AG04449 (cell line): ENCODE measurements at regions of chr18 and their contacts with region 1.

Region 1: DNA sequence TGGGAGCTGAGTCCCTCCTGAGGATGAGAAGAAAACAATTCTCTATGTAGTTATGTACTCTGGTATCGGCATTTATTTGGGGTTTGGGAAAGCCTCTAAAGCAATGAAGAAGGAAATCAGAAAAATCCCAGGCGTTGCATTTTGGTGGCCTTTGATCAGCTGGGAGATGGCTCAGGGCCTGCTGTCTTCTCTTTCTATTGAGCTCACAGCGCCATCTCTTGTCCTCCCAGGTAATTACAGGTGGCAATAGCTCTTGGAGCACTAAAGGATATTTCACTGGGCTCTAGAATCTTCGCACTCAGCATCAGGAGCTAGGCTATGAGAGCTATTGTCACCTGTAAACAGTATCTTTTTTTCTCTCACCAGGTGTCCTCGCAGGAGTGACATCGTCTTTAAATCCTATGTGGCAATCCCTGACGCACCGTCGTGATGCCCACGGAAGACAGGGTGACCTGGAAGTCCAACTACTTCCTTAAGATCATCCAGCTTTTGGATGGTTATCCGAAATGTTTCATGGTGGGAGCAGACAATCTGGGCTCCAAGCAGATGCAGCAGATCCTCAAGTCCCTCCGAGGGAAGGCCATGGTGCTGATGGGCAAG is 76.1 kb upstream of the PMAIP1 start:
- DNase-seq: no peak
- H3K4me3 ChIP-seq: no peak overlapping the region
- CTCF ChIP-seq: peak; percentile 79

Region 2: DNA sequence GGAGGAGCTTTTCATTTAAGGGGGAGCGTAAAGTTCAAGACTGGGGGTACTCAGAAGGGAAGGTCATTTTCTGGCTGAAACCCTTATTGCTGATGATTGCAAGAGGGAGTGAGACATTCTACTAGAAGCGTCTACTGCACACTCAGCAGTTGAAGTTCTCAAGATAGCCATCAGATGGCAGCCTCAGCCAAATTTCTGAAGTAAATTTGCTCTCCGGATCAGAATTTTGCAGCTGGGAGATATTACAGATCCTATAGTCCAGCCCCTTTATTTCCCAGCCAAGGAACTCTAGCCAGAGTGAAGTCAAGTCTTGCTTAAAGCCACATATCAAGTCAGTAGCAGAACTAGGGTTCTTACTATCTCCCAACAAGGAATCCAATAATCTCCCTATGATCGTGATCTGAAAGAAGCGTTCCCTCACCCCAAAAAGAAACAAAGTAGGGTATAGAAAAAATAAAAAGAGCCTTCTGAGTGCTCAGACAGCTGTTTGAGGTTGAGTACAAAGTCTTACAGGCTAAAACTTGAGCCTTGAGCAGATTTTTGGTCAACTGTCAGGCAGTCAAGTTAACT is 574.4 kb before region 1 on chr18:
- CTCF ChIA-PET with region 1: interaction called, 25 read pairs
- POLR2A ChIA-PET with region 1: no interaction called
- DNase-seq: no peak
- H3K4me3 ChIP-seq: no peak overlapping the region
- CTCF ChIP-seq: peak; percentile 65

Region 3: DNA sequence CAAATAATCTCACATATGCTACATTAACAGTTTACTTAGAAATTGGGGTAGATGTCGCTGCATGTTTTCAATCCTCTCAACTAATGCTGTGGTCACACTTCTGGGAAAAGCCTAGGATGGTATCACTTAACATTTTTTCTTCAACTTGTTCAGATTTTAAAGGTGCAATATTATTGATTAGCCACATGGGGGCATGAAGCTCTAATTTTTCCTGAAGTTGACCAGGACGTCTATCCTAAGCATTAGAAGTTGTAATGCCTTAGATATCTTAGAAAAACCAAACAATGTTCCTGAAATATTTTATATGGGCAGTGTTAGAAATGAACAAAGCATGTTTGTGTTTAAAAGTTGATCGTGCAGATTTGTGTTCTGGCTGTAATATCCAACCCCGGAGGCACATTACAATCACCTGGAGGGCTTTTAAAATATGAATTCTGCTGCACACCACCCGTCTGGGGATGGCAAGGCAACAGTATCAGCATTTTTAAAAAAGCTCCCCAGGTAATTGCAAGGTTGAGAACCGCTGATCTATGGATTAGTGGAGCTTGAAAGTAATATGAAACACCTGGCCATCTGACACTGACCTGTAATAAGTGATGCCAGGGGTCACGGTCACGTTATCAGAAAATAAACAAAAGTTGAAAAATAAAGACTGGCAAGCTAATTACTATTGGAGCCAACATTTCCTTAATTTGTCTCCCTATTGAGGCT is 364.2 kb before region 1 on chr18:
- CTCF ChIA-PET with region 1: interaction called, 258 read pairs
- POLR2A ChIA-PET with region 1: interaction called, 5 read pairs
- DNase-seq: no peak
- H3K4me3 ChIP-seq: no peak overlapping the region
- CTCF ChIP-seq: peak; percentile 23

Region 4: GRCh38 chr18:59631583-59632181 is 192.0 kb before region 1 on chr18:
- CTCF ChIA-PET with region 1: interaction called, 216 read pairs
- POLR2A ChIA-PET with region 1: no interaction called
- DNase-seq: no peak
- H3K4me3 ChIP-seq: no peak overlapping the region
- CTCF ChIP-seq: peak; percentile 59

Region 5: GRCh38 chr18:59672235-59672711 is 151.4 kb before region 1 on chr18:
- CTCF ChIA-PET with region 1: interaction called, 36 read pairs
- POLR2A ChIA-PET with region 1: interaction called, 3 read pairs
- DNase-seq: no peak
- H3K4me3 ChIP-seq: no peak overlapping the region
- CTCF ChIP-seq: no peak

Region 6: GRCh38 chr18:59705145-59705544 is 118.6 kb before region 1 on chr18:
- CTCF ChIA-PET with region 1: interaction called, 40 read pairs
- POLR2A ChIA-PET with region 1: no interaction called
- DNase-seq: no peak
- H3K4me3 ChIP-seq: no peak overlapping the region
- CTCF ChIP-seq: no peak

Region 7: DNA sequence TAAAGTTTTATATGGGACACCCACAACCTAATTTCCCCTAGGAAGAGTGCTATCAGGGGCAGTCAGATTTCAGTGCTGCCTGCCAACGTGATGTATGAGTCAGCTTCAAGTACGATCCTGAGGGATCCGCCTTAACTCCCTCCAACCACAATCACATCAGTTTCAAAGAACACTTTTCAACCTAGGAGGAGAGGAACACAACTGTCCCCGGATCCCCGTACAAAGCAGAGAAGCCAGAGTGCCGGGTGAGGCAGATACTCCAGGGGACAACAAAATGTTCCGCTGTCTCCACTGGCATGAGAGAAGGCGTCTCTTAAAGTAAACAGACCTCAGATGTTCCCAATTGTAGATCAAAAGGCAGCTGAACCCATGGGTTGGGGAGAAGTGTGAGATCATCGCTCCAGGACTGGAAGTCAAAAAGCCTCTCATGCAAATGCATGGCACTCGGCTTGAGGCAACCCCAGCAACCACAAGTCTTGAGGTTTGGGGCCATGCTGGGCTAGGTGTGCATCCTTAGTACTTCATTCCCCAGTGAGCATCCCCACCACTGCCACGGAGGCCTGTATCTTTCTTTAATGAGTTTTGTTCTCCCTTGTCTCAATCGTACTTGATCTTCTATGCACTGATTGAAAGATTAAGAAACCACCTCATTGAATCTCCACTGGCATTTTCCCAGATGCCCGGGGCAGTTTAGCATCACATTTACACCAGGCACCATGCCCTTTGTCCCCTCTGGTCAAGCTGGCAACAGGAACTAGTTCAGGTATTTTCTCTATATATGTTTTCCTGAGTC is 35.5 kb before region 1 on chr18:
- CTCF ChIA-PET with region 1: interaction called, 83 read pairs
- POLR2A ChIA-PET with region 1: interaction called, 3 read pairs
- DNase-seq: no peak
- H3K4me3 ChIP-seq: peak overlapping the region; percentile 38
- CTCF ChIP-seq: no peak